Caco-2 (cell line): ENCODE measurements at regions of chr14 and their contacts with region 1.

Region 1: GRCh38 chr14:64671591-64671990 is 32.6 kb upstream of the PLEKHG3 start:
- DNase-seq: peak in 1 of 2 experiments; percentile 55
- H3K4me3 ChIP-seq: no peak overlapping the region
- H3K4me3 Mint-ChIP-seq: no peak overlapping the region
- H3K27ac Mint-ChIP-seq: no peak overlapping the region
- H3K4me1 ChIP-seq: peaks cover 11% of the 10 kb centered on the region; the same call in 1 of the 2 replicates
- H3K4me1 Mint-ChIP-seq: peaks cover 10% of the 10 kb centered on the region
- H3K27me3 ChIP-seq: no peaks in the 10 kb centered on the region
- H3K27me3 Mint-ChIP-seq: no peaks in the 10 kb centered on the region
- CTCF ChIP-seq: peak; percentile 67 to 70

Region 2: DNA sequence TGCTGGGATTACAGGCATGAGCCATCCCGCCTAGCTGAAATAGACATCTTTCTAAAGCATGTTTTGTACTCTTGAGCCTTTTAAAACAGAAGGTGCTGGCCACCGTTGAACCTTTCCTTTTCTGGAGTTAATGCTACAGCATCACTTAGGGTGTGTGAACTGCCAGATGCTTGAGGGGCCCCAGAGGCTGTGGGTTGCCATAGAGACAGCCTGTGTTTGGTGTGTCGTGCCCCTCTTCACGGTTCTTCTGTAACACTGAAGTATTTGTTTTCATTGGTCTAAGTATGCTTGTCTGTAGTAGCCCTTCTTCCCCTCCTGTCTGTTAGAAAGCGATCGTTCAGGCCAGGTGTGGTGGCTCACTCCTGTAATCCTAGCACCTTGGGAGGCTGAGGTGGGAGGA is 63.4 kb after region 1 on chr14:
- CTCF ChIA-PET with region 1: no interaction called
- POLR2A ChIA-PET with region 1: no interaction called
- intact Hi-C with region 1: no loop called
- DNase-seq: no peak
- H3K4me3 ChIP-seq: no peak overlapping the region
- H3K4me3 Mint-ChIP-seq: no peak overlapping the region
- H3K27ac Mint-ChIP-seq: no peak overlapping the region
- H3K4me1 ChIP-seq: 0 out of 2 replicates have a peak, but pooled peaks cover 3% of the 10 kb centered on the region
- H3K4me1 Mint-ChIP-seq: no peaks in the 10 kb centered on the region
- H3K27me3 ChIP-seq: no peaks in the 10 kb centered on the region
- H3K27me3 Mint-ChIP-seq: no peaks in the 10 kb centered on the region
- CTCF ChIP-seq: no peak

Region 3: DNA sequence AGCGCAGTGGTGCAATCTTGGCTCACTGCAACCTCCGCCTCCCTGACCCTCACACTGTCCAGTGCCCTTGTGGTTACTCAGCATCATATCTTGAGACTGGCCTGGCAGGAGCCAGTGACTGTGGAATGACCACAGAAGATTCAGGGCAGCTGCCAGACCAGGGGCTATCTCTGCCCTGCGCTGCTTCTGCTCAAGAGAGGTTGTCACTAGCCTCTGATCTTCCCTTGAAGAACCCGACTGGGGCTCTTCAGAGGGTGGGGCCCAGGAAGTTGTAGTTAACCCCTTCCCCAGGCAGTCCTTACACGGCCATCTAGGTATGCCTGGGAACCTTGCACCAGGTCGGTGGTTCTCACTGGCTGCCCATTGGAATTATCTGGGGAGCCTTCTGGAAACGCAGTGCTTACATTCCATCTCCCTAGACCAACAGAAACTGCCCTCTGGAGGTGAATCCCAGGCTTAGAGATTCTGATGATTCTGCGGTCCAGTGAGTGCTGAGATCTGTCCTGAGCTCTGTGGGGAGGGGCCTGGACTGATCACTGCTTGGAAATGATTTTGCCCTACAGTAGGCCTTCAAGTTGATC is 74.0 kb after region 1 on chr14:
- CTCF ChIA-PET with region 1: no interaction called
- POLR2A ChIA-PET with region 1: no interaction called
- intact Hi-C with region 1: loop called (anchors 1 kb)
- DNase-seq: peak in 1 of 2 experiments; percentile 44
- H3K4me3 ChIP-seq: no peak overlapping the region
- H3K4me3 Mint-ChIP-seq: no peak overlapping the region
- H3K27ac Mint-ChIP-seq: peak overlapping the region; percentile 72
- H3K4me1 ChIP-seq: no peaks in the 10 kb centered on the region
- H3K4me1 Mint-ChIP-seq: no peaks in the 10 kb centered on the region
- H3K27me3 ChIP-seq: no peaks in the 10 kb centered on the region
- H3K27me3 Mint-ChIP-seq: no peaks in the 10 kb centered on the region
- CTCF ChIP-seq: peak in 1 of 2 experiments; percentile 39

Region 4: DNA sequence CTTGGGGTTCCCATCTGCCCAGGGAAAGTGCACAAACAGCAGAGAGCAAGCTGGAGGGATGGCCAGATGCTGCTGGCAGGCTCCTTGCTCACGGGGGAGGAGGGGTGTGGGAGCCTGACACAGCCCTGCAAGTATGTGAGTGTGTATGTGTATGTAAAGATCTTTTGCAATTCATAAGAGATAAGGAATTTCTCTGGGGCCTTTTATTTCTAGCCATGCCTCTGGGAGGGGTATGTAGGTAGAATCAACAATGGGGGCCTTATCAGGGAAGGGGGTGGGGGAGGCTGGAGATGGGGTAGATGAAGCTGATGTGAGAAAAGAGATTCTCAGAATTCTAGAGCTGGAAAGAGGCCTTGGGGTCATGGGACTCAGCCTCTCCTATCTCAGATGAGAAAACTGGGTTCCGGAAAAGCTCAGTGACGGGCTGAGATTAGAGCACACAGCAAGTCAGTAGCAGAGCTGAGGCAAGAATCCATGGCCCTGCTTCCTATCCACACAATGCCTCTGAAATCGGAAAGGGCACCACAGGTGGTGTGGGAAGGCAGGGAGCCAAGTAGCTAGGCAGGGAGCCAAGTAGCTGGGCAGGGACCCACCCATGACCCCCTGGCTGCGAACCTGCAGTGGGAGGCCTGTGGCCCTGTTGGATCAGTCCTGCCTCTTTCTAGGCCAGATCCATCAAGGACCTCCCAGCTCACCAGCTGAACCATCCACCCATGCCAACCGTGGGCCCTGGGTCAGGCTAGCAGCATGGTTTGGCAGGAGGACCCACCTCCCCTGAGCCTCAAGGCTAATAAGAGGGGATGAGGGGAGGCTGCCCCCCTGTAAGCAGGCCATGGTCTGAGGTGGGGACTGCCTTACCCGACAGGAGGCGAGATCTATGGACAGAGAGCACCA is 87.3 kb after region 1 on chr14:
- CTCF ChIA-PET with region 1: interaction called, 9 read pairs
- POLR2A ChIA-PET with region 1: no interaction called
- intact Hi-C with region 1: loop called (anchors 1 kb)
- DNase-seq: peak; percentile 91 to 94
- H3K4me3 ChIP-seq: no peak overlapping the region
- H3K4me3 Mint-ChIP-seq: peak overlapping the region; percentile 51
- H3K27ac Mint-ChIP-seq: peak overlapping the region; percentile 92
- H3K4me1 ChIP-seq: peaks cover 83% of the 10 kb centered on the region
- H3K4me1 Mint-ChIP-seq: peaks cover 75% of the 10 kb centered on the region
- H3K27me3 ChIP-seq: no peaks in the 10 kb centered on the region
- H3K27me3 Mint-ChIP-seq: no peaks in the 10 kb centered on the region
- CTCF ChIP-seq: no peak

Region 5: GRCh38 chr14:64764641-64765520 is 93.3 kb after region 1 on chr14:
- CTCF ChIA-PET with region 1: interaction called, 12 read pairs
- POLR2A ChIA-PET with region 1: no interaction called
- intact Hi-C with region 1: loop called (anchors 1 kb)
- DNase-seq: peak; percentile 76 to 86
- H3K4me3 ChIP-seq: no peak overlapping the region
- H3K4me3 Mint-ChIP-seq: peak overlapping the region; percentile 30
- H3K27ac Mint-ChIP-seq: peak overlapping the region; percentile 19
- H3K4me1 ChIP-seq: peaks cover 37% of the 10 kb centered on the region
- H3K4me1 Mint-ChIP-seq: peaks cover 40% of the 10 kb centered on the region
- H3K27me3 ChIP-seq: no peaks in the 10 kb centered on the region
- H3K27me3 Mint-ChIP-seq: no peaks in the 10 kb centered on the region
- CTCF ChIP-seq: peak; percentile 89 to 93